Pancreas (tissue), 10 donors: ENCODE measurements at regions of chr19 and their contacts with region 1.

Region 1: GRCh38 chr19:40633207-40633606 is 32.0 kb downstream of the LTBP4 start:
- DNase-seq: no peak
- ATAC-seq: no peak
- H3K4me3 ChIP-seq: no peak overlapping the region
- H3K27ac ChIP-seq: no peak overlapping the region
- H3K4me1 ChIP-seq: no peaks in the 10 kb centered on the region
- H3K27me3 ChIP-seq: no peaks in the 10 kb centered on the region
- CTCF ChIP-seq: no peak

Region 2: DNA sequence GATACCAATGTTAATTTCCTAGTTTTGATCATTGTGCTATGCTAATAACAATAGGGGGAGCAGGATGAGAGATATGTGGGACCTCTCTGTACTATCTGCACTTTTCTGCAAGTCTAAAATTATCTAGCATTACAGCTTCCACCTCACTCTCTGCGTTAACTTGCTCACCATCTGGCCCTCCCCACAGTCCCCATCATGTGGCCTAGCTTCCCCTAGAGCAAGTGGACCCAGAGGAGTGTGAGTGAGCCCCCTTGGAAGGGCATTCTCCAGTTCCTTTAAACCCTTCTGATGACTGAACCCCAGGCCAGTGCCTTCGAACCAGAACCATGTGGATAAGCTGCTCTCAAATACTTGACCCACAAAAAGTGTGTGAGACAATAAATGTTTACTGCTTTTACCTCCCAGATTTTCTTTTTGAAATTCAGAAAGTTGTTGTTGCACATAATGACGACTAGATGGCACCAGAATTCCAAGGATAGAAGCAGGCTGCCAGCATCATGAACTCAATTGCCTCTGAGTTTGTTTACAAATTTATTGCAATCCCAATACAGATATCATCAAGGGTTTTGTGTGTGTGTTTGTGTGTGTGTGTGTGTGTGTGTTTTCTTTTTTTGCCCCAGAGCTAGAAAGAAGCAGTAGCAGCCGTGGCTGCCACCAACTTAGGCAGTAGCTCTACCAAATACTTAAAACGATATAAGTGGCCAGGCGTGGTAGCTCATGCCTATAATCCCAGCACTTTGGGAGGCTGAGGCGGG is 493.5 kb before region 1 on chr19:
- intact Hi-C with region 1: loop called in 1 of 3 experiments (anchors 10 kb)
- DNase-seq: no peak
- ATAC-seq: peak; percentile 43 to 79 (median 73)
- H3K4me3 ChIP-seq: no peak overlapping the region
- H3K27ac ChIP-seq: no peak overlapping the region
- H3K4me1 ChIP-seq: no peaks in the 10 kb centered on the region
- H3K27me3 ChIP-seq: peaks cover 0 to 7% (median 0%) of the 10 kb centered on the region in 4 donors
- CTCF ChIP-seq: peak; percentile 23 to 62 (median 38)

Region 3: GRCh38 chr19:40305403-40305802 is 327.8 kb before region 1 on chr19:
- intact Hi-C with region 1: loop called in 1 of 3 experiments (anchors 10 kb)
- DNase-seq: peak; percentile 56 to 75 (median 70)
- ATAC-seq: peak; percentile 77 to 91 (median 87)
- H3K4me3 ChIP-seq: no peak overlapping the region
- H3K27ac ChIP-seq: no peak overlapping the region
- H3K4me1 ChIP-seq: no peaks in the 10 kb centered on the region
- H3K27me3 ChIP-seq: no peaks in the 10 kb centered on the region
- CTCF ChIP-seq: peak; percentile 26 to 69 (median 65)